WTC11 (cell line): ENCODE measurements at regions of chr20 and their contacts with region 1.

Region 1: GRCh38 chr20:46307139-46307998 is 929 bp downstream of the CDH22 start:
- DNase-seq: peak; percentile 82
- ATAC-seq: peak; percentile 89
- H3K4me3 Mint-ChIP-seq: peak overlapping the region; percentile 52
- H3K27ac Mint-ChIP-seq: no peak overlapping the region
- H3K4me1 Mint-ChIP-seq: peaks cover 11% of the 10 kb centered on the region
- H3K27me3 Mint-ChIP-seq: peaks cover 72% of the 10 kb centered on the region
- CTCF ChIP-seq: peak; percentile 87

Region 2: GRCh38 chr20:46268131-46268614 is 39.2 kb before region 1 on chr20:
- CTCF ChIA-PET with region 1: interaction called, 11 read pairs
- POLR2A ChIA-PET with region 1: no interaction called
- DNase-seq: no peak
- ATAC-seq: no peak
- H3K4me3 Mint-ChIP-seq: no peak overlapping the region
- H3K27ac Mint-ChIP-seq: no peak overlapping the region
- H3K4me1 Mint-ChIP-seq: 0 out of 2 replicates have a peak, but pooled peaks cover 3% of the 10 kb centered on the region
- H3K27me3 Mint-ChIP-seq: no peaks in the 10 kb centered on the region; the same call in 1 of the 2 replicates
- CTCF ChIP-seq: no peak

Region 3: GRCh38 chr20:46324960-46325703 is 17.8 kb after region 1 on chr20:
- CTCF ChIA-PET with region 1: interaction called, 34 read pairs
- POLR2A ChIA-PET with region 1: interaction called, 3 read pairs
- DNase-seq: peak; percentile 62
- ATAC-seq: peak; percentile 87
- H3K4me3 Mint-ChIP-seq: no peak overlapping the region
- H3K27ac Mint-ChIP-seq: no peak overlapping the region
- H3K4me1 Mint-ChIP-seq: peaks cover 12% of the 10 kb centered on the region
- H3K27me3 Mint-ChIP-seq: no peaks in the 10 kb centered on the region
- CTCF ChIP-seq: no peak

Region 4: GRCh38 chr20:46336735-46337134 is 29.4 kb after region 1 on chr20:
- CTCF ChIA-PET with region 1: interaction called, 34 read pairs
- POLR2A ChIA-PET with region 1: no interaction called
- DNase-seq: no peak
- ATAC-seq: no peak
- H3K4me3 Mint-ChIP-seq: no peak overlapping the region
- H3K27ac Mint-ChIP-seq: no peak overlapping the region
- H3K4me1 Mint-ChIP-seq: peaks cover 24% of the 10 kb centered on the region
- H3K27me3 Mint-ChIP-seq: peaks cover 7% of the 10 kb centered on the region
- CTCF ChIP-seq: no peak

Region 5: GRCh38 chr20:46438156-46438750 is 130.9 kb after region 1 on chr20:
- CTCF ChIA-PET with region 1: interaction called, 17 read pairs
- POLR2A ChIA-PET with region 1: no interaction called
- DNase-seq: no peak
- ATAC-seq: peak; percentile 70
- H3K4me3 Mint-ChIP-seq: no peak overlapping the region
- H3K27ac Mint-ChIP-seq: no peak overlapping the region
- H3K4me1 Mint-ChIP-seq: no peaks in the 10 kb centered on the region
- H3K27me3 Mint-ChIP-seq: peaks cover 2% of the 10 kb centered on the region
- CTCF ChIP-seq: no peak

Region 6: DNA sequence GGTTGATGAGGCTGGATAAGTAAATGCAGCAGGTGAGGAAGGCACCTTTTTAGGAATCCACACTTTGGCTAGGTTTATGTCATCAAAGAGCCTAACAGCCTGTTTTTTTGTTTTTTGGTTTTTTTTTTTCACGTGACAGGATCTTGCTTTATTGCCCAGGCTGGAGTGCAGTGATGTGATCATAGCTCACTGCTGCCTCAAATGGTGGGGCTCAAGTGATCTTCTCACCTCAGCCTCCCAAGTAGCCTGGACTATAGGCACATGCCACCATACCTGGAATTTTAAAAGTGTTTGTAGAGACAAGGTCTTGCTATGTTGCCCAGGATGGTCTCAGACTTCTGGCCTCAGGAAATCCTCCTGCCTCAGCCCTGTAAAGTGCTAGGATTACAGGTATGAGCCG is 169.9 kb after region 1 on chr20:
- CTCF ChIA-PET with region 1: no interaction called
- POLR2A ChIA-PET with region 1: no interaction called
- DNase-seq: no peak
- ATAC-seq: no peak
- H3K4me3 Mint-ChIP-seq: no peak overlapping the region
- H3K27ac Mint-ChIP-seq: no peak overlapping the region
- H3K4me1 Mint-ChIP-seq: peaks cover 29% of the 10 kb centered on the region
- H3K27me3 Mint-ChIP-seq: no peaks in the 10 kb centered on the region
- CTCF ChIP-seq: no peak